ENCODE measurements at regions of chr3 and their contacts with region 1.

Region 1: DNA sequence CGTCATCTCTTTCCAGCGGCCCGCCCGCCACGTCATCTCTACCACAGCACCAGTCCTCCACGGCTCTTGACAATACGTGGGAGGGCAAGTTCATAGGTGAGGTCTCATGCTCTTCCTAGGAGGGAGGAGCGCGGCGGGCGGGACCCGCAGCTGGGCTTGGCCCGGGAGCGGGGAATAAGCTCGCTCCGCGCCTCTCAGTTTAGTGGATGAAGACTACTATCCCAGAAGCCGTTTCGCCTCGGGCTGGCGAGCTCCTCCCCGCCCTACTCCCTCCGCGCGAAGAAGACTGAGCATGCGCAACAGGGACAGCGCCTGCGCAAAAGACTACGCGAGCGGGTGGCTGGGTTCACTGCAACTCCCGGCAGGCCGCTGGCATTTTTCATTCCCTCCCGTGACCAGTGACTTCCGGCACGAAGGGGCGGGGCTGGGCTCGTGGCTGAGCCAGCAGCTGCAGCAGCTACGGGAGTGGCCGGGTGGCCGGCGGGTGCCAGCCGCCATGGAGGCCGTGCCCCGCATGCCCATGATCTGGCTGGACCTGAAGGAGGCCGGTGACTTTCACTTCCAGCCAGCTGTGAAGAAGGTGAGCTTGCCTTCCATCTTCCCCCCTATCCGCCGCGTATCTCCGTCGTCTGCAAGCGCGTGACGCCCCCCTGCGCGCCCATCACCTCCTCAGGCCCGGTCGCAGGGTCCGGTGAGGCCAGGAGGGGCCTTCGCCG is at the start of gene PTPN23:
- DNase-seq: peak; percentile 99
- ATAC-seq: peak; percentile 81
- H3K4me3 ChIP-seq: peak within 1 kb of the TSS; percentile 61 to 96 (median 91)
- H3K4me3 Mint-ChIP-seq: peak within 1 kb of the TSS; percentile 100
- H3K27ac ChIP-seq: peak within 1 kb of the TSS; percentile 93 to 95
- H3K27ac Mint-ChIP-seq: peak within 1 kb of the TSS; percentile 99
- H3K4me1 ChIP-seq: peaks cover 21 to 31% of the 10 kb centered on the region in 2 donors
- H3K4me1 Mint-ChIP-seq: peaks cover 53% of the 10 kb centered on the region
- H3K27me3 ChIP-seq: no peaks in the 10 kb centered on the region
- H3K27me3 Mint-ChIP-seq: no peaks in the 10 kb centered on the region
- CTCF ChIP-seq: no peak
- total RNA-seq, gene PTPN23: 68.8 TPM in 2 replicates

Region 2: GRCh38 chr3:46987743-46988401 is 392.9 kb before region 1 on chr3:
- CTCF ChIA-PET with region 1: no interaction called
- POLR2A ChIA-PET with region 1: interaction called, 10 read pairs
- intact Hi-C with region 1: no loop called
- DNase-seq: peak; percentile 86
- ATAC-seq: peak; percentile 89
- H3K4me3 ChIP-seq: peak overlapping the region in 4 of 5 experiments; percentile 21 to 41 (median 29)
- H3K4me3 Mint-ChIP-seq: peak overlapping the region; percentile 70
- H3K27ac ChIP-seq: peak overlapping the region; percentile 36 to 64
- H3K27ac Mint-ChIP-seq: peak overlapping the region; percentile 90
- H3K4me1 ChIP-seq: peaks cover 50 to 59% of the 10 kb centered on the region in 2 donors
- H3K4me1 Mint-ChIP-seq: peaks cover 71% of the 10 kb centered on the region
- H3K27me3 ChIP-seq: no peaks in the 10 kb centered on the region
- H3K27me3 Mint-ChIP-seq: no peaks in the 10 kb centered on the region
- CTCF ChIP-seq: no peak

Region 3: DNA sequence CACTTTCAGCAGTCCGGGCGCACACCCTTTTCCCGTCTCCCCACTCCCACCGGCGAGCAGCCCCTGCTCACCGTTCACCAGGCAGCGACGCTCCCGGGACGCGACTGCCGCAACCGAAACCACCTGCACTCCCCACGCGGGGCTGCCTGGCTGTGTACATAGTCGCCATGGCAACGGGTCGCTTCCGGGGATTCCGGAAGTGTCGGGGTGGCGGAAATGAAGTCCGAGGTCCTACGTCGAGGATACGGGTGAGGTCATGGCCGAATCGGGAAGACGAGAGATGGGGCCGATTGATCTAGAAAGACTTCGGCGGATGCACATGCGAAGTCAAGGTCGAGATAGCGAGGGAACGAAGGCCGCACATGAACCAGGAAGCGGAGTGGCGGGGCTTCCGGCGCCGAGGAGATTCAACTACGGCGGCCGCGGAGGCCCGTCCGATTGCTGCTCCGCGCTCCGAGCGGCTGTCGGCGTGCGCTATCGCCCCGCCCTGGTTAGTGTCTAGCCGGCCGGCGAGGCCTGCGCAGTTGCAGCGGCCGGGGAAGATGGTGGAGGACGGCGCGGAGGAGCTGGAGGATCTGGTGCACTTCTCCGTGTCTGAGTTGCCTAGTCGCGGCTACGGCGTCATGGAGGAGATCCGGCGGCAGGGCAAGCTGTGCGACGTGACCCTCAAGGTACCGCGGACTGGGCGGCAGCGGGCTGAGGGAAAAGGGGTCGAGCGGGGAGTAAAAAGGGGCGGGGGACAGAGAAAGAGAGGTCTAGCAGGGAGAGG is 98.2 kb before region 1 on chr3 and contains the starts of genes KIF9 and KLHL18:
- CTCF ChIA-PET with region 1: no interaction called
- POLR2A ChIA-PET with region 1: no interaction called
- intact Hi-C with region 1: loop called (anchors 1 kb)
- DNase-seq: peak; percentile 100
- ATAC-seq: peak; percentile 85
- H3K4me3 ChIP-seq: peak within 1 kb of the TSS; percentile 74 to 98 (median 89)
- H3K4me3 Mint-ChIP-seq: peak within 1 kb of the TSS; percentile 99
- H3K27ac ChIP-seq: peak within 1 kb of the TSS; percentile 99
- H3K27ac Mint-ChIP-seq: peak within 1 kb of the TSS; percentile 100
- H3K4me1 ChIP-seq: peaks cover 33 to 49% of the 10 kb centered on the region in 2 donors
- H3K4me1 Mint-ChIP-seq: peaks cover 45% of the 10 kb centered on the region
- H3K27me3 ChIP-seq: no peaks in the 10 kb centered on the region
- H3K27me3 Mint-ChIP-seq: no peaks in the 10 kb centered on the region
- CTCF ChIP-seq: no peak
- total RNA-seq, gene KIF9: 1.3 and 3.0 TPM in 2 replicates
- total RNA-seq, gene KLHL18: 30.9 and 33.0 TPM in 2 replicates

Region 4: GRCh38 chr3:47420511-47421484 is 40.0 kb after region 1 on chr3:
- CTCF ChIA-PET with region 1: interaction called, 3 read pairs
- POLR2A ChIA-PET with region 1: interaction called, 3 read pairs
- intact Hi-C with region 1: loop called (anchors 1 kb)
- DNase-seq: peak; percentile 92
- ATAC-seq: peak; percentile 98
- H3K4me3 ChIP-seq: peak overlapping the region in 2 of 5 experiments; percentile 8 to 9
- H3K4me3 Mint-ChIP-seq: peak overlapping the region; percentile 76
- H3K27ac ChIP-seq: peak overlapping the region; percentile 77 to 87
- H3K27ac Mint-ChIP-seq: peak overlapping the region; percentile 99
- H3K4me1 ChIP-seq: peaks cover 11 to 12% of the 10 kb centered on the region in 2 donors
- H3K4me1 Mint-ChIP-seq: peaks cover 14% of the 10 kb centered on the region
- H3K27me3 ChIP-seq: no peaks in the 10 kb centered on the region
- H3K27me3 Mint-ChIP-seq: no peaks in the 10 kb centered on the region
- CTCF ChIP-seq: peak; percentile 89

Region 5: GRCh38 chr3:47791193-47791855 is 410.6 kb after region 1 on chr3:
- CTCF ChIA-PET with region 1: no interaction called
- POLR2A ChIA-PET with region 1: no interaction called
- intact Hi-C with region 1: loop called (anchors 2 kb)
- DNase-seq: no peak
- ATAC-seq: no peak
- H3K4me3 ChIP-seq: no peak overlapping the region
- H3K4me3 Mint-ChIP-seq: no peak overlapping the region
- H3K27ac ChIP-seq: no peak overlapping the region
- H3K27ac Mint-ChIP-seq: peak overlapping the region; percentile 4
- H3K4me1 ChIP-seq: no peaks in the 10 kb centered on the region
- H3K4me1 Mint-ChIP-seq: peaks cover 1% of the 10 kb centered on the region
- H3K27me3 ChIP-seq: no peaks in the 10 kb centered on the region
- H3K27me3 Mint-ChIP-seq: no peaks in the 10 kb centered on the region
- CTCF ChIP-seq: no peak

Measured in B cell (primary cell).